Endothelial cell of umbilical vein (primary cell): ENCODE measurements at regions of chrX and their contacts with region 1.

Region 1: GRCh38 chrX:100447654-100448397 is 37.8 kb upstream of the PCDH19 start:
- DNase-seq: peak; percentile 59
- H3K4me3 ChIP-seq: no peak overlapping the region
- H3K27ac ChIP-seq: no peak overlapping the region
- H3K4me1 ChIP-seq: peaks cover 11% of the 10 kb centered on the region
- H3K27me3 ChIP-seq: no peaks in the 10 kb centered on the region
- CTCF ChIP-seq: peak; percentile 60 to 64
- POLR2A ChIP-seq: no peak

Region 2: DNA sequence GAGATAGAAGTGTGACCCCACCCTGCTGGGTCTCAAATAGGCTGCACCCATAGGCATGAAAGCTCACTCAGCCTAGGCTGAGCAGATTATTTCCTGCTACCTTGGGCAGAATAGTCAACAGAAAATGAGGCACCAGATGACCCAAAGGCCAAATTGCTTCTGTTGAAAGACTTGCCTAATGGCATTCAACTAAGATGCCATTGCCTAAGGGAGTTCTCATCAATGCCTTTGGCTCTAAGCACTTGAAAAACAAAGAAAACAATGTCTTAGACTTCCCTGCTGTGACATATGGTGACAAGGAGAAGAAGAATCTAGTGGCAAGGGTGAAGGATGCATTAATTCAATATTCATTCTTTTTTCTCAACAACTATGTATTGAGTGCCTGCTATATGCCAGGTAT is 12.1 kb before region 1 on chrX:
- CTCF ChIA-PET with region 1: interaction called, 22 read pairs
- POLR2A ChIA-PET with region 1: no interaction called
- dilution Hi-C with region 1: no loop called
- intact Hi-C with region 1: no loop called
- DNase-seq: no peak
- H3K4me3 ChIP-seq: no peak overlapping the region
- H3K27ac ChIP-seq: no peak overlapping the region
- H3K4me1 ChIP-seq: no peaks in the 10 kb centered on the region
- H3K27me3 ChIP-seq: no peaks in the 10 kb centered on the region
- CTCF ChIP-seq: no peak
- POLR2A ChIP-seq: no peak

Region 3: DNA sequence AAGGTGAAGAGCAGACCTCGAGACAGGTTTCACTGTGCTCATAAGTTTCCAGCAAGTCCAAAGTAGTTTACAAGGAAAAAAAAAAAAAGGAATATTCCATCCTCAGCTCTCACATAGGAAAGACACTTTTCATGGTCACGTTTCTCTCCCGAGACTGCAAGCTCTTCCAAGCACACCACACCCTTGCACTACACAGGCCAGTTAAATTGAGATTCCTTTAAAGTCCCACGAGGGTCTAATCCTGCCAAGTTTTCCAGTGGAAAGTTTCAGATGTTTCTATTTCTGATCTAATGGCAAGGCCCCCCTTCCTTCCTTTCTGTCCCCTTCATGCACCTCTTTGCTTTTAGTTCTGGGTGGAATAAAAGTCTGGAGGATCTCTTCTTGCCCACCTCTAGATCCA is 30.1 kb after region 1 on chrX:
- CTCF ChIA-PET with region 1: no interaction called
- POLR2A ChIA-PET with region 1: no interaction called
- dilution Hi-C with region 1: no loop called
- intact Hi-C with region 1: no loop called
- DNase-seq: no peak
- H3K4me3 ChIP-seq: no peak overlapping the region
- H3K27ac ChIP-seq: no peak overlapping the region
- H3K4me1 ChIP-seq: no peaks in the 10 kb centered on the region
- H3K27me3 ChIP-seq: no peaks in the 10 kb centered on the region
- CTCF ChIP-seq: no peak
- POLR2A ChIP-seq: no peak

Region 4: GRCh38 chrX:100609591-100609990 is 161.8 kb after region 1 on chrX:
- CTCF ChIA-PET with region 1: interaction called, 20 read pairs
- POLR2A ChIA-PET with region 1: no interaction called
- dilution Hi-C with region 1: no loop called
- intact Hi-C with region 1: no loop called
- DNase-seq: peak; percentile 2
- H3K4me3 ChIP-seq: no peak overlapping the region
- H3K27ac ChIP-seq: no peak overlapping the region
- H3K4me1 ChIP-seq: no peaks in the 10 kb centered on the region
- H3K27me3 ChIP-seq: no peaks in the 10 kb centered on the region
- CTCF ChIP-seq: peak in 1 of 2 donors; percentile 1
- POLR2A ChIP-seq: no peak